ENCODE measurements at regions of chr5 and their contacts with region 1.

Region 1: GRCh38 chr5:6632917-6633468 is at the starts of genes NSUN2 and SRD5A1:
- DNase-seq: peak; percentile 99
- H3K4me3 ChIP-seq: peak within 1 kb of the TSS; percentile 83 to 100 (median 96)
- H3K27ac ChIP-seq: peak within 1 kb of the TSS; percentile 89 to 97 (median 92)
- H3K4me1 ChIP-seq: peaks cover 9 to 86% (median 37%) of the 10 kb centered on the region in 6 donors
- H3K27me3 ChIP-seq: no peaks in the 10 kb centered on the region
- CTCF ChIP-seq: peak in 1 of 11 experiments; percentile 35
- POLR2A ChIP-seq: no peak
- total RNA-seq, gene NSUN2: 53.1 to 77.8 (median 57.6) TPM
- total RNA-seq, gene SRD5A1: 4.6 to 9.3 (median 7.1) TPM

Region 2: DNA sequence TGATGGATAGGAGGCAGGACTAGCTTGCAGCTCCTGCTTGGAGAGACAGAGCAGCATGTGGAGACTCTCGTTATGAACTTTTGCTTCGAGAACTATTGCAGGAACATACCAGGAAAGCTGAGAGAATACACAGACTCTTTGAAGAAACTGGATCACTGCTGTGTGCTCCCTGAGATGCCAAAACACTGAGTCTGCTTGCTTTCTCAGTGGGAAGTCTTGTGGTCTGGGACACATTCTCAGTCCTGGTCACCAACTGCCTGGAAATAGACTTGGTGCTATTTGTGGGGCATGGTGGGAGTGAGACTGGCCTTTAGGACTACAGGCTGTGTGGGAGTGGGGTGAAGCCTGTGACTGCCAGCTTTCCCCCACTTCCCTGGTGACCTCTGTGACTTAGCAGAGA is 507.2 kb before region 1 on chr5:
- intact Hi-C with region 1: no loop called
- DNase-seq: no peak
- H3K4me3 ChIP-seq: no peak overlapping the region
- H3K27ac ChIP-seq: no peak overlapping the region
- H3K4me1 ChIP-seq: no peaks in the 10 kb centered on the region
- H3K27me3 ChIP-seq: no peaks in the 10 kb centered on the region
- CTCF ChIP-seq: no peak
- POLR2A ChIP-seq: no peak

Region 3: GRCh38 chr5:6712577-6713275 is 79.7 kb after region 1 on chr5:
- intact Hi-C with region 1: loop called (anchors 5 kb)
- DNase-seq: peak; percentile 99
- H3K4me3 ChIP-seq: peak overlapping the region; percentile 55 to 91 (median 79)
- H3K27ac ChIP-seq: peak overlapping the region; percentile 96 to 99 (median 98)
- H3K4me1 ChIP-seq: peaks cover 27 to 43% (median 41%) of the 10 kb centered on the region in 6 donors
- H3K27me3 ChIP-seq: no peaks in the 10 kb centered on the region
- CTCF ChIP-seq: peak in 4 of 11 experiments; percentile 4 to 24 (median 13)
- POLR2A ChIP-seq: peak in 1 of 3 donors; percentile 67

Measured in spleen (tissue), 13 donors.